ENCODE measurements at regions of chr10 and their contacts with region 1.

Region 1: GRCh38 chr10:23994479-23995046 is 214.4 kb upstream of the KIAA1217 start:
- DNase-seq: peak; percentile 7
- H3K4me3 ChIP-seq: no peak overlapping the region
- H3K27ac ChIP-seq: no peak overlapping the region
- H3K27me3 ChIP-seq: no peaks in the 10 kb centered on the region
- CTCF ChIP-seq: peak; percentile 84

Region 2: GRCh38 chr10:24008164-24009091 is 13.9 kb after region 1 on chr10:
- CTCF ChIA-PET with region 1: interaction called, 16 read pairs
- POLR2A ChIA-PET with region 1: no interaction called
- DNase-seq: no peak
- H3K4me3 ChIP-seq: no peak overlapping the region
- H3K27ac ChIP-seq: no peak overlapping the region
- H3K27me3 ChIP-seq: no peaks in the 10 kb centered on the region
- CTCF ChIP-seq: no peak

Region 3: GRCh38 chr10:24034571-24034970 is 40.0 kb after region 1 on chr10:
- CTCF ChIA-PET with region 1: no interaction called
- POLR2A ChIA-PET with region 1: no interaction called
- DNase-seq: no peak
- H3K4me3 ChIP-seq: no peak overlapping the region
- H3K27ac ChIP-seq: no peak overlapping the region
- H3K27me3 ChIP-seq: no peaks in the 10 kb centered on the region
- CTCF ChIP-seq: no peak

Region 4: GRCh38 chr10:24503461-24504320 is 509.1 kb after region 1 on chr10:
- CTCF ChIA-PET with region 1: interaction called, 11 read pairs
- POLR2A ChIA-PET with region 1: interaction called, 3 read pairs
- DNase-seq: peak; percentile 92
- H3K4me3 ChIP-seq: no peak overlapping the region
- H3K27ac ChIP-seq: peak overlapping the region; percentile 81
- H3K27me3 ChIP-seq: no peaks in the 10 kb centered on the region
- CTCF ChIP-seq: peak; percentile 76

Region 5: DNA sequence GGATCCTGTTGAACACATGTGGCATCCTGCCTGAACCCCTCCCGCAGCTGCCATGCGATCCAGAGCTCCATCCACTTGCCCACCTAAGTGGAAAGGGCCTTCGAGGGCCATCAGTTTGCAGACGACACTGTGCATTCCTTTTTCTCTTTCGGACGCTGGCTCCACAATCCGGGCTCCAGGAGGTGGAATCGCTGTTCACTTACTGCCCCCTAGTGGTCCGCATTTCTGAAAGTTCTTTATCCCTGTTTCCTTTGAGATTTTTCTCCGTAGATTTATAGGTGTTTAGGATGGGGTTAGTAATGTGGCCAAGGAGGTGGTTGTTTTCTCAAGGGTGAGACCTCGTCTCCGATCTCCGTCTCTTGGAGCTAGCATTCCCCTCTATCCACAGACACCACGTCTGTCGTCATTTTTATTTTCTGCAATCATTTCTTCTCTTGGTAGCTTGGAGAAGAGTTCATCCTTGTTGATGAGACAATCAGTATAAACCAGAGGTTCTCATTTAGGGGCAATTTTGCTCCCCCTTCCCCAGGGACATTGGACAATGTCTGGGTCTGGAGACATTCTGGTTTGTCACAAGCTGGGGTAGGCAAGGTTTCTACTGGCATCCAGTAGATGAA is 524.5 kb after region 1 on chr10:
- CTCF ChIA-PET with region 1: interaction called, 94 read pairs
- POLR2A ChIA-PET with region 1: no interaction called
- DNase-seq: peak; percentile 21
- H3K4me3 ChIP-seq: no peak overlapping the region
- H3K27ac ChIP-seq: no peak overlapping the region
- H3K27me3 ChIP-seq: no peaks in the 10 kb centered on the region
- CTCF ChIP-seq: peak; percentile 86

Region 6: DNA sequence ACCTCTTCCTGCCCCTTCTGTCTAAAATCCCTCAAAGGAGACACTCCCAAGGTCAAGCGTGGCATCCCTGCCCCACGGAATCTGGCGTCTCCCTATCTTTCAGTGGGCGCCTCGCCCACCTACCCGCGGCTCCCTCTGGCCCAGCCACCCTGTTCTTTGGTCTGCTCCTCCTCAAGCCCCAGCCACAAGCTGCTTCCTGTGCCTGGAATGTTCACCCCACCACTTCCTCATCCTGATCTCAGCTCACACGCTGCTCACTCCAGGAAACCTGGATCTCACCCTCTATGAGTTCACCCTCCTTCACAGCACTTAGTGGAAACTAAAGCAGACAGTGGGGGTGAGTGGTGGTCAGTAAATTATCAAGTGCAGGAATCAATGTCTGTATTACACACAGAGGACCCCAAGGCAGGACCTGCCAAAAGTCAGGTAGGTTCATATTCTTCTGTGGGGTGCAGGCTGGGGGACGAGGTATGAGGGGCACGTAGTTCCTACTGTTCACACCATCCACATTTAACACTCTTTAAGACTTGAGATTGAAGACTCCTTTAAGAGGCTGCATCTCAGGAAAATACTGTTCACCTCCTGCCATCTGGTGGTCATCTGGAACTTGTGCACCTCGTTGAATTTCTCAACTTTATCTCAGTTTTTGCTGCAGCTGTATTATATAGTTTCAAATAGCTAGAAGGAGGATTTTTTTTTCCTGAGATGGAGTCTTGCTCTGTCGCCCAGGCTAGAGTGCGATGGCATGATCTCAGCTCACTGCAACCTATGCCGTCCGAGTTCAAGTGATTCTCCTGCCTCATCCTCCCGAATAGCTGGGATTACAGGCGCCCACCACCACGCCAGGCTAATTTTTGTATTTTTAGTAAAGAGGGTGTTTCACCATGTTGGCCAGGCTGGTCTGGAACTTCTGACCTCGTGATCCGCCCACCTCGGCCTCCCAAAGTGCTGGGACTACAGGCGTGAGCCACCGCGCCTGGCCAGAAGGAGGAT is 562.5 kb after region 1 on chr10:
- CTCF ChIA-PET with region 1: interaction called, 33 read pairs
- POLR2A ChIA-PET with region 1: no interaction called
- DNase-seq: peak; percentile 59
- H3K4me3 ChIP-seq: no peak overlapping the region
- H3K27ac ChIP-seq: no peak overlapping the region
- H3K27me3 ChIP-seq: peaks cover 16% of the 10 kb centered on the region
- CTCF ChIP-seq: peak; percentile 77

Measured in AG04450 (cell line).